A549 (cell line): ENCODE measurements at regions of chr16 and their contacts with region 1.

Region 1: DNA sequence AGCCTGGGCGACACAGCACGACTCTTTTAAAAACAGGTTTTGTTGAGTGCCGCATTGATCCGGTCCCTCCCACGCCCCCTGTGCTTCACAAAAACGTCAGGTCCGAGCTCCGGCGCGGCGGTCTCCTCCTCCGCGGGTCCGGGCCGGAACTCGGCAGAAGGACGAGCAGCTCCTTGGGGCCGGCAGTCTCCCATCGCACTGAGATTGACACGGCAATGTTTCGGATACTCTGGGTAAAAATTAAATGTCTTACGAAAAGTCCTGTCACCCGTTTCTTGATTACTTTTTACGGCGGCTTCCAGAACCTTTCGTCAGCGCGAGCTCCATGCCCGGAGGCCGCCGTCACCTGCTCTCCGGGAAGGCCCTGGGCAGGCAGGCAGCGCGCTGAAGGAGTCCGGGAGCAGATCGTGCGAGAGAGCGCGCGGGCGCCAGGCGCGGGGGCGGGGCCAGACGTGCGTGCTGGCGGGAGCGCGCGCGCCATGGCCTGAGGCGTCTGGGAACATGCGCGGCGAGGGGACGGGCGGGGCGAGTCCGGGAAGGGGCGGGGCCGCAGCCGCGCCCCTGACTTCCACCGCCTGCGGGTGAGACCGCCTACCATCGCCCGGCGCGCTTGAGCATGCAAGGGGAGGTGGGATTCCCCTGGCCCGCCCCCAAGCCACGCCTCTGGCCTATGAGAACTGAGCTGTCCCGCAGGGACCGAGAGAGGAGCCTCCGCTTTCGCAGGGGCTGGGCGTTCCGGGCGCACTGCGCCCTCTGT is 11.7 kb upstream of the SRL start:
- DNase-seq: peak; percentile 95 to 100
- ATAC-seq: peak; percentile 95 to 96
- H3K4me3 ChIP-seq: peak overlapping the region; percentile 49
- H3K27ac ChIP-seq: peak overlapping the region; percentile 74 to 88
- H3K4me1 ChIP-seq: no peaks in the 10 kb centered on the region
- CTCF ChIP-seq: no peak
- EP300 ChIP-seq: no peak
- POLR2A ChIP-seq: peak; percentile 95
- RAD21 ChIP-seq: peak in 1 of 2 experiments; percentile 95; a peak in 4 of 5 replicates

Region 2: GRCh38 chr16:3950343-3951193 is 303.0 kb before region 1 on chr16:
- CTCF ChIA-PET with region 1: interaction called, 13 read pairs
- POLR2A ChIA-PET with region 1: no interaction called
- DNase-seq: peak in 1 of 2 experiments; percentile 52
- ATAC-seq: peak; percentile 45 to 63; a peak in 3 of 6 replicates
- H3K4me3 ChIP-seq: no peak overlapping the region
- H3K27ac ChIP-seq: peak overlapping the region in 1 of 2 experiments; percentile 24; a peak in 3 of 6 replicates
- H3K4me1 ChIP-seq: peaks cover 11% of the 10 kb centered on the region
- CTCF ChIP-seq: no peak
- EP300 ChIP-seq: no peak
- POLR2A ChIP-seq: no peak
- RAD21 ChIP-seq: no peak

Region 3: GRCh38 chr16:4176612-4177417 is 76.8 kb before region 1 on chr16:
- CTCF ChIA-PET with region 1: interaction called, 16 read pairs
- POLR2A ChIA-PET with region 1: interaction called, 13 read pairs
- DNase-seq: peak; percentile 62 to 63
- ATAC-seq: peak; percentile 90 to 96
- H3K4me3 ChIP-seq: no peak overlapping the region
- H3K27ac ChIP-seq: peak overlapping the region in 1 of 2 experiments; percentile 41; a peak in 3 of 6 replicates
- H3K4me1 ChIP-seq: peaks cover 20% of the 10 kb centered on the region
- CTCF ChIP-seq: no peak
- EP300 ChIP-seq: no peak
- POLR2A ChIP-seq: no peak
- RAD21 ChIP-seq: no peak

Region 4: DNA sequence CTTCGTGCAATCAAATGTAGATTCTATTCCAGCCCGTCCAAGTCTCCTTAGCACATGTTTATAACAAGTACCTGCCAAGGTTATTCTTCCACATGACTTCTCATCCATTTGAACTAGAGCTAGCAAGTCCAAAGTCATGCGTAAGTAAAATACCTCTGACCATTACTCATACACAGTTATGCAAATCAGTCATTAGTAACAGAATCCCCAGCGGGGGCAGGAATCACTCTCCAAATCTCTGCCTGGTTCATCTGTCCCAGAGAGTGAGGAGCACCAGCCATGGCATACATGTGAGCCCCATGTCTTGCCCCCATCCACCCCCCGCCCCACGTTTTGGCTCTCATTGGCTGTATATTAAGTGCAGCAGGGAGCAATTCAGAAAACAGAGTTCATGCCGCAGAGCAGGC is 39.4 kb before region 1 on chr16:
- CTCF ChIA-PET with region 1: interaction called, 18 read pairs
- POLR2A ChIA-PET with region 1: interaction called, 5 read pairs
- DNase-seq: peak; percentile 40 to 52
- ATAC-seq: peak; percentile 18 to 58; a peak in 3 of 6 replicates
- H3K4me3 ChIP-seq: no peak overlapping the region
- H3K27ac ChIP-seq: peak overlapping the region; percentile 57 to 82
- H3K4me1 ChIP-seq: peaks cover 24% of the 10 kb centered on the region
- CTCF ChIP-seq: no peak
- EP300 ChIP-seq: no peak
- POLR2A ChIP-seq: no peak
- RAD21 ChIP-seq: no peak

Region 5: GRCh38 chr16:4271176-4272066 is 17.8 kb after region 1 on chr16:
- CTCF ChIA-PET with region 1: interaction called, 62 read pairs
- POLR2A ChIA-PET with region 1: interaction called, 16 read pairs
- DNase-seq: peak; percentile 89 to 96
- ATAC-seq: peak; percentile 73 to 86
- H3K4me3 ChIP-seq: peak overlapping the region; percentile 87
- H3K27ac ChIP-seq: peak overlapping the region; percentile 98 to 99
- H3K4me1 ChIP-seq: peaks cover 10% of the 10 kb centered on the region
- CTCF ChIP-seq: peak; percentile 16; the same call in 1 of the 3 replicates
- EP300 ChIP-seq: no peak
- POLR2A ChIP-seq: peak; percentile 61
- RAD21 ChIP-seq: no peak

Region 6: GRCh38 chr16:4330277-4330874 is 76.8 kb after region 1 on chr16:
- CTCF ChIA-PET with region 1: interaction called, 45 read pairs
- POLR2A ChIA-PET with region 1: no interaction called
- DNase-seq: peak; percentile 72 to 77
- ATAC-seq: peak; percentile 84 to 90
- H3K4me3 ChIP-seq: no peak overlapping the region
- H3K27ac ChIP-seq: peak overlapping the region in 1 of 2 experiments; percentile 87; a peak in 1 of 6 replicates
- H3K4me1 ChIP-seq: peaks cover 44% of the 10 kb centered on the region
- CTCF ChIP-seq: peak; percentile 92
- EP300 ChIP-seq: no peak
- POLR2A ChIP-seq: no peak
- RAD21 ChIP-seq: peak; percentile 94 to 97